ENCODE measurements at regions of chr20 and their contacts with region 1.

Region 1: GRCh38 chr20:10316582-10316981 is 98.0 kb downstream of the SNAP25 start:
- DNase-seq: peak; percentile 36
- ATAC-seq: no peak
- H3K4me3 Mint-ChIP-seq: no peak overlapping the region
- H3K27ac Mint-ChIP-seq: no peak overlapping the region
- H3K4me1 Mint-ChIP-seq: no peaks in the 10 kb centered on the region
- H3K27me3 Mint-ChIP-seq: peaks cover 31% of the 10 kb centered on the region

Region 2: GRCh38 chr20:9474835-9475415 is 841.7 kb before region 1 on chr20:
- CTCF ChIA-PET with region 1: no interaction called
- POLR2A ChIA-PET with region 1: no interaction called
- intact Hi-C with region 1: no loop called
- DNase-seq: no peak
- ATAC-seq: no peak
- H3K4me3 Mint-ChIP-seq: no peak overlapping the region
- H3K27ac Mint-ChIP-seq: no peak overlapping the region
- H3K4me1 Mint-ChIP-seq: no peaks in the 10 kb centered on the region
- H3K27me3 Mint-ChIP-seq: no peaks in the 10 kb centered on the region

Region 3: DNA sequence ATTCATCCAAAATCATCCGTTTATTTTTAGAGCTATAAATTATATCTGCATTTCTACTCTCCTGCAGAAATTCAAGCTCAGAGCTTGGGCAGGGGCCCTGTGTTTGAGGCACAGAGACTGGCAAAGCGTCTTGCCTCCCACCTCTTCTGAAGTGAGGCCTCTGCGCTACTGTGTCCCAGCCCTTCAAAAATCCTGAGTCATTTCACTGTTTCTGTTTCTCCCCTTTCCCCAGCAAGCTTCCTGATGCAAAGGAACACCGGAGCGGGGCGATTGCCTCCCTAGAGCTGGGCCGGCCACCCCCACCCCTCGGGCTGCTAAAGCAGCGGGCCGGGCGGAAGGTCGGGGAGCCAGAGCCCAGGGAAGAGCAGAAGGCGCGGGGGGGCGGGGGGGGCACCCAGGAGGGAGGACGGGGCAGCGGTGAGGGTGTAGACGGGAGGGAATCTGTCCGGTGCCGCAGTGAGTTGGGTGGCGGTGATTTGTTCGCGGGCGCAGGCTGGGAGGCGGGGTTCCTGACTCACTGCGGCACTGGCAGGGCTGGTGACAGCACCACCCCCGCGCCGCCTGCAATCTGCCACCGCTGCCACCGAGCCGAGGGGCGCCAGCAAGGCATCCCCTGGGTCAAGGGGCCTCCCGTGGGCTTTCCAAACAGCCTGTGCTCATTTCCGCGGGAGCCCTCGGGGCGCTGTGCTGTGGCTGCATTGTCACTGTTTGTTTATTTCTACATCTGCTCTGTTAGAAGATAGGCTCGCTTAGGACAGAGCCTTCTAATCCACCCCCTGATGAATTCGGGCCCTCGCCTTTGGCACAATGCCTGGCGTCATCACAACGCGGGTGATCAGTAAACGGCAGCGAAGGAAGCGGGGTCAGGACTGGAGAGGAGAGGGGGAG is 144.5 kb before region 1 on chr20:
- CTCF ChIA-PET with region 1: no interaction called
- POLR2A ChIA-PET with region 1: no interaction called
- intact Hi-C with region 1: no loop called
- DNase-seq: peak; percentile 75
- ATAC-seq: peak; percentile 91
- H3K4me3 Mint-ChIP-seq: peak overlapping the region; percentile 46
- H3K27ac Mint-ChIP-seq: no peak overlapping the region
- H3K4me1 Mint-ChIP-seq: peaks cover 4% of the 10 kb centered on the region
- H3K27me3 Mint-ChIP-seq: peaks cover 25% of the 10 kb centered on the region

Region 4: DNA sequence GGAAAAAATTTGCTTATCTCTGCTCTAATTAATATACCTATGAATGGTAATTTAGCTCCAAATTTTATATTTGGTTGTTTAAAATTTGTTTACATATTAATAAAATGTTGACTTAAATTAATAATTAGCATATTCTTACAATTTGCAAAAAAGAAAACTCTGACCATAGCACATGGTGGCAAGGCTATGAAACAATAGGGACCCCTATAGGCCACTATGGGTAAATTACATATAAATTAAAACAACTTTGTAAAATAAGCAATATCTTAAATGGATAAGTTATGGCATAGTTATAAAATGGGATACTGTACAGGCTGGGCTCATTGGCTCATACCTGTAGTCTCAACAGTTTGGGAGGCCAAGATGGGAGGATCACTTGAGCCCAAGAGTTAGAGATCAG is 41.4 kb after region 1 on chr20:
- CTCF ChIA-PET with region 1: no interaction called
- POLR2A ChIA-PET with region 1: no interaction called
- intact Hi-C with region 1: loop called in 1 of 2 experiments (anchors 2 kb)
- DNase-seq: no peak
- ATAC-seq: no peak
- H3K4me3 Mint-ChIP-seq: no peak overlapping the region
- H3K27ac Mint-ChIP-seq: no peak overlapping the region
- H3K4me1 Mint-ChIP-seq: peaks cover 4% of the 10 kb centered on the region
- H3K27me3 Mint-ChIP-seq: no peaks in the 10 kb centered on the region

Region 5: GRCh38 chr20:10427060-10427692 is 110.6 kb after region 1 on chr20:
- CTCF ChIA-PET with region 1: interaction called, 14 read pairs
- POLR2A ChIA-PET with region 1: no interaction called
- intact Hi-C with region 1: loop called (anchors 1 to 10 kb)
- DNase-seq: peak; percentile 66
- ATAC-seq: no peak
- H3K4me3 Mint-ChIP-seq: no peak overlapping the region
- H3K27ac Mint-ChIP-seq: no peak overlapping the region
- H3K4me1 Mint-ChIP-seq: peaks cover 41% of the 10 kb centered on the region
- H3K27me3 Mint-ChIP-seq: no peaks in the 10 kb centered on the region

Region 6: GRCh38 chr20:11544029-11544678 is 1227.6 kb after region 1 on chr20:
- CTCF ChIA-PET with region 1: no interaction called
- POLR2A ChIA-PET with region 1: no interaction called
- intact Hi-C with region 1: loop called in 1 of 2 experiments (anchors 5 kb)
- DNase-seq: peak; percentile 25
- ATAC-seq: no peak
- H3K4me3 Mint-ChIP-seq: no peak overlapping the region
- H3K27ac Mint-ChIP-seq: no peak overlapping the region
- H3K4me1 Mint-ChIP-seq: no peaks in the 10 kb centered on the region
- H3K27me3 Mint-ChIP-seq: no peaks in the 10 kb centered on the region